HEK293T (cell line): ENCODE measurements at regions of chr6 and their contacts with region 1.

Region 1: GRCh38 chr6:27146706-27147505 is 100.6 kb upstream of the PRSS16 start:
- DNase-seq: peak; percentile 84

Region 2: DNA sequence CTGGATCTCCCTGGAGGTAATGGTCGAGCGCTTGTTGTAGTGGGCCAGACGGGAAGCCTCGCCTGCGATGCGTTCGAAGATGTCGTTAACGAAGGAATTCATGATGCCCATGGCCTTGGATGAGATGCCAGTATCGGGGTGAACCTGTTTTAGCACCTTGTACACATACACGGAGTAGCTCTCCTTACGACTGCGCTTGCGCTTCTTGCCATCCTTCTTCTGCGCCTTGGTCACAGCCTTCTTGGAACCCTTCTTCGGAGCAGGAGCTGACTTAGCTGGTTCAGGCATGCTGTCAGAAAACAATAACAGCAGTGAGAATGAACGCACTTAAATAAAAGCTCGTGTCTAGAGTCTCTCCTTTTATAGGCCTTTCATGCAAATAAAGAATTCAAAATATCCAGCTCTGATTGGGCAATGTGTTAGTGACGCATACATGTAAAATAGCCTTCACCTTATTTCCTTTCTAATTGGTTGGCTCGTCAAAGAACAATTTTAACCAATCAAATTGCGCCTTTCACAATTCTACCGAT is 930.5 kb before region 1 on chr6:
- CTCF ChIA-PET with region 1: no interaction called
- POLR2A ChIA-PET with region 1: interaction called, 14 read pairs
- DNase-seq: no peak

Region 3: GRCh38 chr6:27157459-27158315 is 10.8 kb after region 1 on chr6:
- CTCF ChIA-PET with region 1: interaction called, 3 read pairs
- POLR2A ChIA-PET with region 1: interaction called, 30 read pairs
- DNase-seq: peak; percentile 50

Region 4: DNA sequence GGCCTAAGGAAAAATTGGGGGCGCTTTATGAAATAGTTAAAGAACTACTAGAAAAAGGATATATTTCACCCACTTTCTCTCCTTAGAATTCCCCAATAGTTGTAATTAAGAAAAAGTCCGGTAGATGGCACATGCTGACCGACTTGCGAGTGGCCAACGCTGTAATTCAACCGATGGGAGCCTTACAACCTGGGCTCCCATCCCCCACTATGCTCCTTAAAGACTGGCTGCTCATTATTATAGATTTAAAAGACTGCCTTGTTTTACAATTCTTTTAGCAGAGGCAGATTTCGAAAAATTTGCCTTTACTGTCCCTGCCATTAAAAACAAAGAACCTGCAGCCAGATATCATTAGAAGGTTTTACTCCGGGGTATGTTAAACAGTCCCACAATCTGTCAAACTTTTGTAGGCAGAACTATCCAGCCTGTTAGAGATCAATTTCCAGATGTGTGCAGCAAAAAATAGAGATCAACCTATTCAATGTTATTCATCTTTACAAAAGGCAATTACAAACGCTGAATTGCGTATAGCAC is 42.0 kb after region 1 on chr6:
- CTCF ChIA-PET with region 1: no interaction called
- POLR2A ChIA-PET with region 1: interaction called, 12 read pairs
- DNase-seq: peak; percentile 57

Region 5: GRCh38 chr6:27825025-27825793 is 678.3 kb after region 1 on chr6:
- CTCF ChIA-PET with region 1: no interaction called
- POLR2A ChIA-PET with region 1: interaction called, 14 read pairs
- DNase-seq: no peak